ENCODE measurements at regions of chr17 and their contacts with region 1.

Region 1: GRCh38 chr17:10875979-10876555 is 38.2 kb upstream of the PIRT start:
- DNase-seq: peak; percentile 58
- ATAC-seq: no peak
- H3K4me3 Mint-ChIP-seq: no peak overlapping the region
- H3K27ac Mint-ChIP-seq: no peak overlapping the region
- H3K4me1 Mint-ChIP-seq: no peaks in the 10 kb centered on the region
- H3K27me3 Mint-ChIP-seq: peaks cover 11% of the 10 kb centered on the region
- CTCF ChIP-seq: peak; percentile 78

Region 2: DNA sequence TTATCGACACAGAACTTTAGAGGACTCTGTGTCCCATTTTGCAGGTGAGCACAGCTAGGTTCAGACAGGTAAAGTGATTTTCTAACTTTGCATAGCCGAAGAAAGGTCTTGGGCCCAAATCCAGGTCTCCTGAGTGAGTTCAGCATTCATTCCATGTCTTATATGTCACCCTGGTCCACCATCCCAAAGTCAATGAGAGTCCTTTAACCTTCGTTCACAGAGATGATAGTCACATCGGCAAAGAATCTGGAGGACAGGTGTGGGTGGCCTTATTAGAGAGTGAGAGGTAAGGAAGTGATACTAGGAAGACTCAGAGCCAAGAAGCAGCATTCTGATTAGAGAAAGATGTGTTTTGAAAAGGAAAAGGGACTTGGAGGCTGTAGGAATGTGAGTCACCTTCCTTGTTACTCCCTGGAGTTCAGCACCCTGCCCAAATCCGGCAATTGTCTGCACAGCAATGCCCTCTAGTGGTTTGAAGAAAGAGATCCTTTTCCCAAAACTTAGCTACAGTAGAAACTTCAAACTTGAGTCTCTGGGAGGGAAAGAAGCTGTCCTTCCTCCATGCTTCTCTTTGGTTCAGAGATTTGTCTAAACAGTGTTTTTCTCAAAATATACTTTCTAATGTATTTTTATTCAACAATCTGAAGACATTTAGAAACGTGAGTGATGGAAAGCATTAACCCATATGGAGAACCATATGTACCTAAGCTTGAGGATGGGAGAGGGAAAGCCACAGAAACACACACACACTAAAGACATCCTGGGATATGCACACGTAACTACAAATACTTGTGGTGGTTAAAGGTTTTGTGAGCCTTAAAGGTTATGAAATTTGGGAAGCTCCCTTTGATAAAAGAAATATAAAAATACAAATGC is 268.5 kb after region 1 on chr17:
- CTCF ChIA-PET with region 1: interaction called, 19 read pairs
- POLR2A ChIA-PET with region 1: no interaction called
- intact Hi-C with region 1: loop called (anchors 10 kb)
- DNase-seq: peak; percentile 12
- ATAC-seq: no peak
- H3K4me3 Mint-ChIP-seq: no peak overlapping the region
- H3K27ac Mint-ChIP-seq: no peak overlapping the region
- H3K4me1 Mint-ChIP-seq: no peaks in the 10 kb centered on the region
- H3K27me3 Mint-ChIP-seq: peaks cover 1% of the 10 kb centered on the region
- CTCF ChIP-seq: peak; percentile 60

Region 3: DNA sequence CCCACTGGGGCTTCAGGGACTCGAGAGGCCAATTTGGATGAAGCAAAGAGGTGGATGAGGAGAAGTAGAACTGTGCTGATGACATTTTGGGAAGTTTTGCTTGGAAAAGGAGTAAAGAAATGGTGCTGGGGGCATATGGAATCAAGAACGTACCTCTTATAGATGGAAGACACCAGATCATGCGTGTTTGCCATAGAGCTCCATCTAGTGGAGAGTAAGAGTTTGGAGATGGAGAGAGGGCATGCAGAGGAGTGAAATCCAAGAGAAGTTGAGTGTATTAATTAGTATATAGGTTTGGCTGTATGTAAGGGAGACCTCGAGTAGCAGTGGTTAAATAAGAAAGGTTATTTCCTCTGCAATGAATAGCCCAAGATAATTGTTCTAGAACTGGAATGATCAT is 420.9 kb after region 1 on chr17:
- CTCF ChIA-PET with region 1: interaction called, 17 read pairs
- POLR2A ChIA-PET with region 1: no interaction called
- intact Hi-C with region 1: loop called (anchors 5 kb)
- DNase-seq: no peak
- ATAC-seq: no peak
- H3K4me3 Mint-ChIP-seq: no peak overlapping the region
- H3K27ac Mint-ChIP-seq: no peak overlapping the region
- H3K4me1 Mint-ChIP-seq: no peaks in the 10 kb centered on the region
- H3K27me3 Mint-ChIP-seq: peaks cover 6% of the 10 kb centered on the region
- CTCF ChIP-seq: peak; percentile 35

Region 4: GRCh38 chr17:11644261-11645212 is 768.5 kb after region 1 on chr17:
- CTCF ChIA-PET with region 1: interaction called, 12 read pairs
- POLR2A ChIA-PET with region 1: no interaction called
- intact Hi-C with region 1: no loop called
- DNase-seq: peak; percentile 53
- ATAC-seq: no peak
- H3K4me3 Mint-ChIP-seq: no peak overlapping the region
- H3K27ac Mint-ChIP-seq: no peak overlapping the region
- H3K4me1 Mint-ChIP-seq: no peaks in the 10 kb centered on the region
- H3K27me3 Mint-ChIP-seq: no peaks in the 10 kb centered on the region
- CTCF ChIP-seq: peak; percentile 68

Measured in activated CD8-positive, alpha-beta T cell treated with anti-CD3 and anti-CD28 coated beads for 36 hours (primary cell).